T-cell (primary cell): ENCODE measurements at regions of chr6 and their contacts with region 1.

Region 1: DNA sequence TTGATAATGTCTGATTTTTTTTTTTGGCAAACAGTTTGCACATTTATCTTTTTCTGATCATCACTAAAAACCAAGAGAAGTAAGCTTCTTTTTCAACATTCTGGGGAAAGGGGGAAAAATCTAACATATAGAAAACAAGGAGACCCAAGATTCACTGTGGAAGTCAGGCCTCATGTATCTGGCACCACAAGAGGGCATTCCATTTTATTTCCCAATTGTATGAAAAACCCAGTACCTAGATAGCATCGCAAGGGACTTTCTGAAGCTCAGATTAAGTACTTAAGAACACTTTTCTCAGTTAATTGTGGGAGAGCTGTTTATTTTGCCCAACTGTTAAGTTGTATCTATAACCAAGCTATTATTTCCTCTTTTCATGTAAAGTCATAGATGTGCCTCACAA is 152.9 kb downstream of the KLHL32 start:
- DNase-seq: no peak
- ATAC-seq: no peak
- H3K4me3 ChIP-seq: no peak overlapping the region
- H3K4me3 Mint-ChIP-seq: no peak overlapping the region
- H3K27ac ChIP-seq: no peak overlapping the region
- H3K27ac Mint-ChIP-seq: no peak overlapping the region
- H3K4me1 ChIP-seq: no peaks in the 10 kb centered on the region
- H3K4me1 Mint-ChIP-seq: peaks cover 6 to 11% (median 10%) of the 10 kb centered on the region in 3 donors
- H3K27me3 ChIP-seq: no peaks in the 10 kb centered on the region
- H3K27me3 Mint-ChIP-seq: no peaks in the 10 kb centered on the region

Region 2: DNA sequence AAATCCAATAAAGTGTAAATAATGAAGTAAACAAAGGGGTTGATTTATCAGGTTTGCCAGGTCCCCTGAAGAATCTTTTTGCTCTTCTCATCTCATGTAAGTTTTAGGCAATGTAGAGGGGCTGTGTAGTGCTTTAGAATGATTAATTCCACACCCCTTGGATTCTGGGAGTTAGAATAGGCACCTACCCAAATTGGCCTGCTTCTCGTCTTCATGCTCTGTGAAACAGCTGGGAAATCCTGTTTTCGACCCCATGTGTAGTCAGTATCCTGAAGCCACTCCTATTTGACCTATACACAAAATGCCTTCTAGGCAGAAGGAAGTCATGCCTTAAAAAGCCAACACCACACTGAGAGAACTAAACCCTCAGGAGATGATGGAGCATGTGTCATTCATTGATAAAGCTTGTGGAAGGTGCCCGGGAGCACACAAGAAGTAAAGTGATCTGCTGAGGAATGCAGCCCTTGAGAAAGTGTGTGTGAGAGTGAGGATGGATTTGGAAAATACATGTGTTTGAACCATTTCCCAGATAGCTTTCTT is 18.0 kb after region 1 on chr6:
- CTCF ChIA-PET with region 1: no interaction called
- POLR2A ChIA-PET with region 1: interaction called, 3 to 13 read pairs
- DNase-seq: no peak
- ATAC-seq: no peak
- H3K4me3 ChIP-seq: no peak overlapping the region
- H3K4me3 Mint-ChIP-seq: no peak overlapping the region
- H3K27ac ChIP-seq: no peak overlapping the region
- H3K27ac Mint-ChIP-seq: no peak overlapping the region
- H3K4me1 ChIP-seq: no peaks in the 10 kb centered on the region
- H3K4me1 Mint-ChIP-seq: peaks cover 0 to 7% (median 0%) of the 10 kb centered on the region in 3 donors
- H3K27me3 ChIP-seq: no peaks in the 10 kb centered on the region
- H3K27me3 Mint-ChIP-seq: no peaks in the 10 kb centered on the region